Head of caudate nucleus (tissue), 42 donors: ENCODE measurements at regions of chr7 and their contacts with region 1.

Region 1: GRCh38 chr7:131107337-131108211 is 220.1 kb upstream of the MKLN1 start:
- DNase-seq: peak; percentile 66 to 93 (median 83)

Region 2: GRCh38 chr7:131072505-131073091 is 35.0 kb before region 1 on chr7:
- intact Hi-C with region 1: loop called (anchors 1 kb)
- DNase-seq: no peak

Region 3: DNA sequence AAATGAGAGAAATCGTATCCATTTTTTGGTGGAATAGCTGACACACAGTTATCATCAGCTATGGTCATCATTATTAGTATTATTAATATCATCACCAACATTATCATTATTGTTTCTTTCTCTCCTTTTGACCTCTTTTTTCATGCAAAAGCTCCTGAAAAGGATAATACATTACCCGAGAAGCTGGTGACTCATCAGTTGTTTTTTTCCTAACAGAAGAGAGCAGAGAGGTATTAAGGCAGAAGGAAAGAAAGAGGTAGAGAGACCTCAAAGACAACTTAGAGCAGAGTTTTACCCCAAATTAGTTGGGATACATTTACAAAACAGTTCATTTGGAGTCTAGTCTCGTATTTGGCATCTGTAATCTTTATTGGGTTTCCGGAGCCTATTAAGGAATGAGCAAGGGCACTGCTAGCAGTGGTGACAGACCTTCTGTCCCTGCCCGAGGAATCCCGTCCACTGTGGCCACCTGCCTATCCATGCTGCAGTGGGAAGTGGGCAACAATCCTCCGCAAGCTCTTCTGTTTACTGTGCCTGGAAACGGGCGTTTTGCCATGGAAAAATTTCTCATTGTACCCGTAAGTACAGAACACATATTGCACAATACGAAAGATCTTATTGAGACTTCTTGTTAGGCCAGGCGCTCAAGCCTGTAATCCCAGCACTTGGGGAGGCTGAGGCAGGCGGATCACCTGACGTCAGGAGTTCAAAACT is 50.1 kb after region 1 on chr7:
- intact Hi-C with region 1: no loop called
- DNase-seq: peak in 1 of 42 donors; percentile 19

Region 4: DNA sequence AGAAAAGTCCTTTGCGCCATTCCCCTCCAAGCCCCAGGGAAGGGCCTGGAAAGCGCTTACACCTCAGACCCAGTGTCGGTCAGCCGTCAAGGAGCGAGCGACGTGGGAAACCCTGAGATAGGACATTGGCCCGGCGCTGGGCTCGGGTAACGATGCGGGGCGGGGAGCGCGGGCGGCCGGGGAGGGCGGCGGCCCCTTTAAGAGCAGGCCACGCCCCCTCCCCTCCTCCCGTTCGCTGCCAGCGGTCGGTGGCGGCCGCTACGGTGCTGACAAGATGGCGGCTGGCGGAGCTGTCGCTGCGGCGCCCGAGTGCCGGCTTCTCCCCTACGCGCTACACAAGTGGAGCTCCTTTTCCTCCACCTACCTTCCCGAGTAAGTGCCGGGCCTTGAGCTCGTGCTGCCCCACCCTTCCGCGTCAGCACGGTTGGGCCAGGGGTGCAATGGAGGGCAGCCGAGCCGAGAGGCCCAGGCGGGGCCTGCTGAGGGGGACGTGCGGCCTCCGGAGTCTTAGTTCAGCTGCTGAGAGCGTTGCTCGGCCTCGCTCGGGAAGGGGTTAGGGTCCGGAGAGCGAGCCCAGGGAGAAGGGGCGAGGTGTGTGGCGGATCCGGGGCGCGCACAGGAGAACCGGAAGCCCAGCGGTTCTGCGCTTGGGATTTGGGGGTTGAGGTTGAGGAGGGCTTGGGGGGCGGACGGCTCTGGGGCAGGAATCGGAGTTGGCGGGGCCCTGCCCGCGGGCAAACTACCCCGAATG is 220.2 kb after region 1 on chr7 and contains the start of gene MKLN1:
- intact Hi-C with region 1: loop called (anchors 5 kb)
- DNase-seq: peak; percentile 77 to 97 (median 93)

Region 5: DNA sequence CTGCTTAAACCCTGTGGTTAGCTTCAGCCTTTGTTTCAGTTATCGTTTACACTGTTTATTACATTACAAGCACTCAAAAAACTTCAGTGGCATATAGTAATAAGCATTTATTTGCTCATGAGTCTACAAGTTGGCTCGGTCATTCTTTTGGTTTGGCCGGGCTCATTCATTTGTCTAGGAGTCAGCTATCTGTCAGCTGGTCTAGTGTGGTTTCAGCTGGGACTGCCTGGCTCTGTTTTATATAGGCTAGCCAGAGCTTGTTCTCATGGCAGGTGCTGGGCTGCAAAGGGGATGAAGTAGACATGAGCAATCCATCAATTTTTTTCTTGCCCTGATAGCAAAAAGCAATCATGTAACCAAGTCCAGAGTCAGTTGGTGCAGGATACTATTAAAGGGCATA is 323.7 kb after region 1 on chr7:
- intact Hi-C with region 1: loop called (anchors 10 kb)
- DNase-seq: peak; percentile 14 to 90 (median 70)